ENCODE measurements at regions of chr7 and their contacts with region 1.

Region 1: DNA sequence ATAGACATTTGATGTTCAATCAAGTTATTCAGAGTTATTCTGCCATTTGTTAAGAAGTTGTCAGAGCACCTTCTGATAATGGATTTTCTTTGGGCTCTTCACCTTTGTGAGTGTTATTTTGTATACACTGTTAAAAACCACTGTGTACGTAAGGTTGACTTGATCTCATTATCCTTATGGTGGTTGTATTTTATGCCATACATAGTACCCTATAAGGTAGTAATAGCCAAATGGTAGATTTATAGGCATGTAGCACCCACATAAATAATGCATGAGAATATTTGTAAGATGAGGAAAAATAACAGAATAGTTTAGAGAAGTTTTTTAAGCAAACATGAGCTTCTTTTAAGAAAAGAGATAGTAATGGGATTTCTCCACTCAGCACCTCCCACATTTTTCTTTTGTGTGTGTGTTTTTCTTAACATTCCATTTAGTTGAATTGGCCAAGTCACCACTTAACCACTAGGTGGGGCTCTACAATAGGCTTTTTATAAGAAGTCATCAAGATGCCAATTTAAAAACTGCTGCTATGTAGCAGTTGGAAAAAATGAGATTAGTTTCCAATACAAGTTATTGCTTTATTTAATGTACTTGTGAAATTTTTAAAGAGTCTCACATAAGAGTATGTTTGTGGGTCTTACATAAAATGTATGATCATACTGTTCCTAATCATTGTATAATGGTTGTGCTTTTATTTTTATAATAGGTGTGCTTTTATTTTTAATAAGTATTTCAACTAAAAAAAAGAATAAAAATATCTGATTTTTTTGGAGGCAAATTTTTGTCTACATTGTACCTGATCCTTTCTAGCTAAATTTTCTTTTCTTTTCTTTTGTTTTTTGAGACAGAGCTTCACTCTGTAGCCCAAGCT is 41.1 kb upstream of the STMP1 start:
- DNase-seq: peak; percentile 65
- H3K4me3 ChIP-seq: no peak overlapping the region
- H3K27ac ChIP-seq: no peak overlapping the region
- H3K4me1 ChIP-seq: no peaks in the 10 kb centered on the region
- CTCF ChIP-seq: peak; percentile 98

Region 2: GRCh38 chr7:135584362-135585353 is 36.6 kb before region 1 on chr7:
- CTCF ChIA-PET with region 1: no interaction called
- POLR2A ChIA-PET with region 1: no interaction called
- intact Hi-C with region 1: loop called (anchors 5 kb)
- DNase-seq: no peak
- H3K4me3 ChIP-seq: no peak overlapping the region
- H3K27ac ChIP-seq: no peak overlapping the region
- H3K4me1 ChIP-seq: no peaks in the 10 kb centered on the region
- CTCF ChIP-seq: no peak

Measured in OCI-LY7 (cell line).